ENCODE measurements at regions of chr14 and their contacts with region 1.

Region 1: DNA sequence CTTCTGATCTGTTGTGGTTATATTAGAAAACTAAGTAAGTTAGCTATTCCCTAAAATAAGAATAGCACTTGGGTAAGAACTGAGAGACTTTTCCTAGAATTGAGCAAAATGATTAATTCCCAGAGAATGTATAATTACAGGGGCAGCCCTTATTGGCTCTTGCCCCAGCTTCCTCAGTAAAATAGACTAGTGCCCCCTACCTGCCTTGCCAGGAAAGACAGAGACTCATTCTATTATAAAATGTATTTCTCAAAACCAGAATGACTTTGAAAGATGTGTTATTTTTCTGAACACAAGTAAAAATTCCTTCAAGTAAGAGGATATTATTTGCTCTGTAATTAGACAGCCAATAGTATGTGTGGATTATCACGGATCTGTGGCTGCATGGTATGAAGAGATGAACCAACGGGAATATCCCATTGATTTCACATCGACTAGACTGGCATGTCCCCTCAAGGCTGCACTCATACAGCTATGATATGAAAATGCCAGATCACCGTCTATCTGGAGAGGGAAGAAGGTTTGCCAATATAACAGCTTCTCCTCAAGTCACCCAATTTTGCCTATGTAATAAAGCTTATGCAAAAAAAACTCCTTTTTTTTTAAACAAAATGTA is 7.4 kb upstream of the GLRX5 start:
- DNase-seq: no peak
- H3K4me3 ChIP-seq: no peak overlapping the region
- H3K27ac ChIP-seq: no peak overlapping the region
- H3K4me1 ChIP-seq: peaks cover 48% of the 10 kb centered on the region
- H3K27me3 ChIP-seq: no peaks in the 10 kb centered on the region
- CTCF ChIP-seq: peak; percentile 71 to 80

Region 2: GRCh38 chr14:95157327-95158189 is 369.9 kb before region 1 on chr14 and contains the start of gene DICER1:
- CTCF ChIA-PET with region 1: no interaction called
- dilution Hi-C with region 1: no loop called
- in situ Hi-C with region 1: no loop called
- intact Hi-C with region 1: loop called (anchors 10 kb)
- DNase-seq: peak; percentile 91
- H3K4me3 ChIP-seq: peak within 1 kb of the TSS; percentile 68 to 75 (median 75)
- H3K27ac ChIP-seq: peak within 1 kb of the TSS; percentile 84
- H3K4me1 ChIP-seq: peaks cover 12% of the 10 kb centered on the region
- H3K27me3 ChIP-seq: no peaks in the 10 kb centered on the region
- CTCF ChIP-seq: no peak
- total RNA-seq, gene DICER1: 48.4 to 56.0 TPM

Region 3: GRCh38 chr14:95442633-95443021 is 84.9 kb before region 1 on chr14:
- CTCF ChIA-PET with region 1: interaction called, 12 read pairs
- dilution Hi-C with region 1: no loop called
- in situ Hi-C with region 1: loop called (anchors 5 kb)
- intact Hi-C with region 1: loop called (anchors 1 kb)
- DNase-seq: peak; percentile 56
- H3K4me3 ChIP-seq: no peak overlapping the region
- H3K27ac ChIP-seq: no peak overlapping the region
- H3K4me1 ChIP-seq: no peaks in the 10 kb centered on the region
- H3K27me3 ChIP-seq: no peaks in the 10 kb centered on the region
- CTCF ChIP-seq: peak; percentile 93 to 95

Region 4: DNA sequence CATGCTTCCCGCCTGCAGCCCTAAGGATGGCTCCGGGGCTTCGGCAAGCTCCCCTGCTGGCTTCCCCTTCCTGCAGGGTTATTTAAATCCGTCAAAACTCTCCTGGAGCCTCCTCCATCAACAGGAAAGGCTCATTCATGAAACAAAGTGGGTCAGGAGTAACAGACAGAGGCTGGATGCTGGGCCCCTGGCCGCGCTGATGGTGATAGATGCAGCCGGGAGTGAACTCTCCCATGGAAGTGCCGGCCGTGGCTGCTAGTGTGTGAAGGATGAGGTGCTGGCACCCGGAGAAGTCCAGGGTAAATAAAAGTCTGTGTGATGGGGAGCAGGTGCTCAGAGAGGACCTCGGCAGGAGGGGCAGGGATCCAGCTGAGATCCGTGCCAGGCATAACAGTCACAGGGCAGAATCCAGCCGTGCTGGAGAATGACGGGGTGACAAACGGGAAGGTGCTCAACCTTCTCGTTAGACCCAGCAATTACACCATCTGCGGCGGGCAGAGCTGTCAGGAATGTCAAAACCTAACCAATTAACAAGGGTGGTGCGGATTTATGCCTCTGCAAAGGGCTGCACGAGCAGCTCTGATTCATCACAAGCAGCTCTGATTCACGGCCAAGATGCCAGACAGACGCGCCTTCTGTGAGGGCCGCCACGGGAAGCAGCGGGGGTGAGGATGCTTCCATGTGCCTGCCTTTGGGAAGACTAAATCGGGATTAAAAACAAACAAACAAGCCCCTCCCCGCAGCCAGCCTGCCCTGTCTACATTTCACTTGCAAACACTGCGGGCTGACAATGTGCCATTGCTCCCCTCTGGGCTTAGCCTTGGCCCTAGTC is 66.6 kb before region 1 on chr14:
- CTCF ChIA-PET with region 1: no interaction called
- dilution Hi-C with region 1: loop called (anchors 5 kb)
- in situ Hi-C with region 1: no loop called
- intact Hi-C with region 1: no loop called
- DNase-seq: no peak
- H3K4me3 ChIP-seq: no peak overlapping the region
- H3K27ac ChIP-seq: no peak overlapping the region
- H3K4me1 ChIP-seq: peaks cover 7% of the 10 kb centered on the region
- H3K27me3 ChIP-seq: no peaks in the 10 kb centered on the region
- CTCF ChIP-seq: no peak

Region 5: GRCh38 chr14:95507701-95508103 is 19.8 kb before region 1 on chr14:
- CTCF ChIA-PET with region 1: no interaction called
- dilution Hi-C with region 1: no loop called
- in situ Hi-C with region 1: no loop called
- intact Hi-C with region 1: loop called (anchors 1 kb)
- DNase-seq: peak; percentile 73
- H3K4me3 ChIP-seq: no peak overlapping the region
- H3K27ac ChIP-seq: peak overlapping the region; percentile 21
- H3K4me1 ChIP-seq: peaks cover 29% of the 10 kb centered on the region
- H3K27me3 ChIP-seq: no peaks in the 10 kb centered on the region
- CTCF ChIP-seq: no peak